ENCODE measurements at regions of chr2 and their contacts with region 1.

Region 1: DNA sequence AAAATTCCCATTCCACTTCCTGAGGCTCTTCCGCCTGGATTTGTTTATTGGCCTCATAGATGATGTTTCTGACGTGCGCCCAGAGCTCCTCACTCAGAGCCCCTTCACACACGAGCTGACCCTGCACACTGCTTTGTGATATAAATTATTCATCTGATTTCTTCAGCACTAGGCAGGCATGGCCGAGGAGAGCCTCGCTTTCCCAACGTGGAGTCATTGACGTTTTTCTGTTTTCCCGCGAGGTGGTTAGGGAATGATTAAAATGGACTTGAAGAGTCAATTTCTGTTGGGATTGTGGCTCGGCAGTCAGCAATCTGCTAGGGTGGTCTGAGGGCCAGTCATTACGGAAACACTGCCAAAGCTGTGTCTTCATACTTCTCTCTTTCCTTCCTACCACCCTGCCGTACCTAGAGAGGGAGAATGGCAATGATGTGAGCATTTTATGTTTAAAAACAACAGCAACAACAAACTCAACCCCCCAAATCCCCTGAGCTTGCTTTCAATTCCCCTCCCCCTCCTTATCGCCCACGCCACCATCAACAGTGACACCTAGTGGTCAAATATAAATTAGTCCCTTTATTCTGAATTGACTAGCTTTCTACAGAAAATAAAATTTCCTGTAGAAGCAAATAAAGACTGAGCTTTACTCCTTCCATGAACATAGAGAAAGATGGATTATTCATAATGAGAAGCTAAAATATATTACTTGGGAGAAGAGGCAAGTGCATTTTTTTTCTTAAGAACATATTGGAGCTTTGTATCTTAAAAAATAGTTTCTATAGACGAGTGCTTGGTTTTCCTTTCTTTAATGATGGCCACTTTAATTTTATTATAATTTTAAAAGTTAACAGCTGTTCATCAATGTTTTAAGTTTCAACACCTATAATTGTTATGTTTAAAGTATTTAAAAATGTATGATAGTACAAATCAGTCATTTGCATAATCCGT is 285.1 kb downstream of the MTX2 start:
- DNase-seq: peak in 1 of 2 donors; percentile 65
- H3K4me3 ChIP-seq: peak overlapping the region; percentile 52 to 59
- H3K27ac ChIP-seq: peak overlapping the region; percentile 64 to 66
- H3K4me1 ChIP-seq: peaks cover 7 to 11% of the 10 kb centered on the region in 2 donors
- H3K27me3 ChIP-seq: no peaks in the 10 kb centered on the region
- CTCF ChIP-seq: peak; percentile 71 to 85 (median 81)

Region 2: GRCh38 chr2:176269319-176270099 is 284.9 kb before region 1 on chr2 and contains the start of gene MTX2:
- intact Hi-C with region 1: loop called (anchors 10 kb)
- DNase-seq: peak in 1 of 2 donors; percentile 73
- H3K4me3 ChIP-seq: peak within 1 kb of the TSS; percentile 69 to 100
- H3K27ac ChIP-seq: peak within 1 kb of the TSS; percentile 79 to 80
- H3K4me1 ChIP-seq: peaks cover 0 to 2% of the 10 kb centered on the region in 2 donors
- H3K27me3 ChIP-seq: no peaks in the 10 kb centered on the region
- CTCF ChIP-seq: peak in 1 of 3 experiments; percentile 8
- total RNA-seq, gene MTX2: 8.5 TPM

Region 3: GRCh38 chr2:176415937-176416499 is 138.4 kb before region 1 on chr2:
- intact Hi-C with region 1: no loop called
- DNase-seq: no peak
- H3K4me3 ChIP-seq: no peak overlapping the region
- H3K27ac ChIP-seq: no peak overlapping the region
- H3K4me1 ChIP-seq: peaks cover 0 to 6% of the 10 kb centered on the region in 2 donors
- H3K27me3 ChIP-seq: no peaks in the 10 kb centered on the region
- CTCF ChIP-seq: no peak

Region 4: GRCh38 chr2:176518823-176519222 is 35.6 kb before region 1 on chr2:
- intact Hi-C with region 1: no loop called
- DNase-seq: no peak
- H3K4me3 ChIP-seq: no peak overlapping the region
- H3K27ac ChIP-seq: peak overlapping the region in 1 of 2 donors; percentile 28
- H3K4me1 ChIP-seq: no peaks in the 10 kb centered on the region
- H3K27me3 ChIP-seq: no peaks in the 10 kb centered on the region
- CTCF ChIP-seq: no peak

Region 5: DNA sequence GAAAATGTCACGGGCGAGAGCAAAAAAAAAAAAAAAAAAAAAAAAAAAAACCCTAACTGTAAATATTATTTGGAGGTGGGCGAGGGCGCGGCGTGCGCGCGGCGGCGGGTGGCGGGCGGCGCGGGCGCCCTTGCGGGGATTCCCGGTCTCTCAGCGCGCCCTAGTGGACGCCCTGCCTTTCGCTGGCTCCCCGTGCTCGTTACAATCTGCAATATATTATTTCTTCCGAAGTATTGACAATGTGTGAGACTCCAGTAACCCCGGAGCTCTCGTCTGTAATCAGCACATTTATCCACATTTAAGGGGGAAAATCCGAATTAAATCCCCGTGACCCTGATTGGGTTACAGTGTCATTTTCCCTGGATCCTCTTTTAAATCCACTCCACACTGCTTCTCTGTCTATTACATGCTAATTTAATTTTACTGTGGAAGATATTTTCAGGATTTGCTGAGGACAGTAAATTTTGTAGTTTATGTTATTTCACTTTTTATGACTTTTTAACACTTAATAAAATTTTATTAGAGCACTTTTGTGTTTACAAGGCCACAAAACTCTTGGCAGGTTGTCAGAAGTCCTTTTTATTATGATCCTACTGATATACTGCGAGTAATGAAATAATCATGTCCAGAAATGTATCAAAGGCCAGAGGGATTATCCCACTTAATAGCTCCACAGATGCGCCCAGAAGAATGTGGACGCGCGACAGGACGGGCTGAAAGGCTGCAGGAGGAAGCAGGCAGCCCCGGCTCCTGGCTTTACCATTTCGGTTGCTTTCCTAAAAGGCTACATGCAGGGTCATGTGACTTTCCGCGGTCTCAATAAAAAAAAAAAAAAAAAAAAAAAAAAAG is 84.0 kb after region 1 on chr2:
- intact Hi-C with region 1: loop called (anchors 2 kb)
- DNase-seq: peak in 1 of 2 donors; percentile 78
- H3K4me3 ChIP-seq: peak overlapping the region; percentile 77 to 83
- H3K27ac ChIP-seq: peak overlapping the region in 1 of 2 donors; percentile 56
- H3K4me1 ChIP-seq: peaks cover 3 to 5% of the 10 kb centered on the region in 2 donors
- H3K27me3 ChIP-seq: no peaks in the 10 kb centered on the region
- CTCF ChIP-seq: peak; percentile 30 to 63 (median 60)

Measured in ascending aorta (tissue), 2 donors.